Naive thymus-derived CD4-positive, alpha-beta T cell (primary cell): ENCODE measurements at regions of chr20 and their contacts with region 1.

Region 1: GRCh38 chr20:63864847-63865640 is at the start of gene TPD52L2:
- DNase-seq: peak; percentile 86 to 98 (median 96)
- ATAC-seq: peak; percentile 91
- H3K4me3 ChIP-seq: peak within 1 kb of the TSS; percentile 74
- H3K4me3 Mint-ChIP-seq: peak within 1 kb of the TSS; percentile 88 to 100 (median 98)
- H3K27ac ChIP-seq: peak within 1 kb of the TSS; percentile 84
- H3K27ac Mint-ChIP-seq: peak within 1 kb of the TSS; percentile 91 to 99 (median 97)
- H3K4me1 ChIP-seq: peaks cover 11 to 14% of the 10 kb centered on the region in 2 donors
- H3K4me1 Mint-ChIP-seq: peaks cover 27 to 42% (median 36%) of the 10 kb centered on the region in 7 donors
- H3K27me3 ChIP-seq: no peaks in the 10 kb centered on the region
- H3K27me3 Mint-ChIP-seq: no peaks in the 10 kb centered on the region
- total RNA-seq, gene TPD52L2: 33.7 to 56.8 (median 43.2) TPM

Region 2: DNA sequence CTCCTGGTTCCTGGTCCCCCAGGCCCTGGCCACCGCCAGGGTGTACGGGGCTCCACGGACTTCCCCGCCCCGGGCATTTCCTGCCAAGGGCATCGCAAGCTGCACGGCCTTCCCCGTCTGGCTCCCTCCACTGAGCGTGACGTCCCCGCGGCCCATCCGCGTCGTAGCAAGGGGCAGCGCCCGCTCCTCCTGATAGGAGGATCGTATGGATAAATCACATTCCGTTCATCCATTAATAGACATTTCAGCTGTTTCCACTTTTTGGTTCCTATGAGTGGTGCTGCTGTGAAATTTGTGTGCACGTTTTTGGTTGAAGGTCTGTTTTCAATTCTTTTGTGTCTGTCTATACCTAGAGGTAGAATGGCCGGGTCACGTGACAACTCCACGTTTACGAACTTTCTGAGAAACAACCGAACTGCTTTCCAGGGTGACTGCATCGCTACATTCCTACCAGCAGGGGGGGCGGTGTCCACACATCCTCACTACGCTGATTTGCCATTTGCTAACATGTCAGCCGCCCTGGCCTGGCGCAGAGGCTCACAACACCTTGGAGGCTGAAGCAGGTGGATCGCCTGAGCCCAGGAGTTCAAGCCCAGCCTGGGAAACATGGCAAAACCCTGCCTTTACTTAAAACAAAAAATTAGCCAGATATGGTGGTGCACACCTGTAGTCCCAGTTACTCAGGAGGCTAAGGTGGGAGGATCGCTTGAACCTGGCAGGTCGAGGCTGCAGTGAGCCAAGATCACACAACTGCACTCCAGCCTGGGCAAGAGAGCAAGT is 430.3 kb before region 1 on chr20:
- CTCF ChIA-PET with region 1: no interaction called
- POLR2A ChIA-PET with region 1: no interaction called
- intact Hi-C with region 1: loop called in 1 of 2 experiments (anchors 10 kb)
- DNase-seq: peak; percentile 56 to 84 (median 77)
- ATAC-seq: peak; percentile 89
- H3K4me3 ChIP-seq: peak overlapping the region; percentile 25
- H3K4me3 Mint-ChIP-seq: peak overlapping the region; percentile 50 to 79 (median 70)
- H3K27ac ChIP-seq: peak overlapping the region; percentile 49
- H3K27ac Mint-ChIP-seq: peak overlapping the region; percentile 49 to 93 (median 85)
- H3K4me1 ChIP-seq: peaks cover 0 to 9% of the 10 kb centered on the region in 2 donors
- H3K4me1 Mint-ChIP-seq: peaks cover 8 to 16% (median 14%) of the 10 kb centered on the region in 7 donors
- H3K27me3 ChIP-seq: no peaks in the 10 kb centered on the region
- H3K27me3 Mint-ChIP-seq: peaks cover 0 to 9% (median 0%) of the 10 kb centered on the region in 5 donors

Region 3: DNA sequence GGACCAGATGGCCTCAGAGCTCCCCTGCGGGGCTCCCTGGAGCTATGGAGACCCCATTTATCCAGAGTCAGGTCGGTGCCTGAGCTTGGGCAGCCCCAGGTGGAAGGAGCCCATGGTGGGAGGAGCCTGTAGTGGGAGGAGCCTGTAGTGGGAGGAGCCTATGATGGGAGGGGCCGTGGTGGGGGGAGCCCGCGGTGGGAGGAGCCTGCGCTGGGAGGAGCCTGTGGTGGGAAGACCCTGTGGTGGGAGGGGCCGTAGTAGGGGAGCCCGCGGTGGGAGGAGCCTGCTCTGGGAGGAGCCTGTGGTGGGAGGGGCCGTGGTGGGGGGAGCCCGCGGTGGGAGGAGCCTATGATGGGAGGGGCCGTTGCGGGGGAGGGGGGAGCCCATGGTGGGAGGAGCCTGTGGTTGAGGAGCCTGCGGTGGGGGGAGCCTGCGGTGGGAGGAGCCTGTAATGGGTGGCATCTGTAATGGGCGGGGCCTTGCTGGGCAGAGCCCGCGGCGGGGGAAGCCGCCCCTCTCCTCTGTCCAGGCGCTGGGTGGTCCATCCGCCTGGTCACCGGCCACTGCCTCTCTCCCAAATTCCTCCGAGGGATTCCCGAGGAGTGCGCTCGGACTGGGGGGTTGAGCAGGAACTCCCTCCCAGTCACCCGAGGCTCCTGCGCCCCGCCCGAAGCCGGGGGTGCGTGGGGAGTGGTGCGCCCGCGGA is 311.7 kb before region 1 on chr20:
- CTCF ChIA-PET with region 1: no interaction called
- POLR2A ChIA-PET with region 1: no interaction called
- intact Hi-C with region 1: loop called (anchors 1 kb)
- DNase-seq: peak; percentile 81 to 96 (median 88)
- ATAC-seq: peak; percentile 92
- H3K4me3 ChIP-seq: peak overlapping the region; percentile 68
- H3K4me3 Mint-ChIP-seq: peak overlapping the region; percentile 70 to 85 (median 76)
- H3K27ac ChIP-seq: peak overlapping the region; percentile 70
- H3K27ac Mint-ChIP-seq: peak overlapping the region; percentile 62 to 97 (median 92)
- H3K4me1 ChIP-seq: peaks cover 13 to 21% of the 10 kb centered on the region in 2 donors
- H3K4me1 Mint-ChIP-seq: peaks cover 9 to 18% (median 13%) of the 10 kb centered on the region in 7 donors
- H3K27me3 ChIP-seq: no peaks in the 10 kb centered on the region
- H3K27me3 Mint-ChIP-seq: peaks cover 0 to 19% (median 5%) of the 10 kb centered on the region in 5 donors

Region 4: GRCh38 chr20:63657937-63658748 is 206.9 kb before region 1 on chr20 and contains the start of gene RTEL1:
- CTCF ChIA-PET with region 1: interaction called, 3 read pairs
- POLR2A ChIA-PET with region 1: interaction called, 3 read pairs
- intact Hi-C with region 1: loop called (anchors 1 kb)
- DNase-seq: peak; percentile 79 to 99 (median 89)
- ATAC-seq: peak; percentile 90
- H3K4me3 ChIP-seq: peak within 1 kb of the TSS; percentile 100
- H3K4me3 Mint-ChIP-seq: peak within 1 kb of the TSS; percentile 86 to 97 (median 94)
- H3K27ac ChIP-seq: peak within 1 kb of the TSS; percentile 83
- H3K27ac Mint-ChIP-seq: peak within 1 kb of the TSS; percentile 93 to 97 (median 95)
- H3K4me1 ChIP-seq: peaks cover 18 to 20% of the 10 kb centered on the region in 2 donors
- H3K4me1 Mint-ChIP-seq: peaks cover 14 to 57% (median 36%) of the 10 kb centered on the region in 7 donors
- H3K27me3 ChIP-seq: no peaks in the 10 kb centered on the region
- H3K27me3 Mint-ChIP-seq: peaks cover 0 to 2% (median 0%) of the 10 kb centered on the region in 5 donors
- total RNA-seq, gene RTEL1: 28.4 to 47.2 (median 32.4) TPM

Region 5: GRCh38 chr20:63782051-63782471 is 83.0 kb before region 1 on chr20:
- CTCF ChIA-PET with region 1: interaction called, 4 read pairs
- POLR2A ChIA-PET with region 1: interaction called, 4 read pairs
- intact Hi-C with region 1: loop called (anchors 1 kb)
- DNase-seq: peak in 6 of 9 donors; percentile 60 to 74 (median 64)
- ATAC-seq: peak; percentile 95
- H3K4me3 ChIP-seq: no peak overlapping the region
- H3K4me3 Mint-ChIP-seq: peak overlapping the region in 8 of 10 donors; percentile 31 to 78 (median 48)
- H3K27ac ChIP-seq: no peak overlapping the region
- H3K27ac Mint-ChIP-seq: peak overlapping the region in 6 of 9 donors; percentile 55 to 92 (median 64)
- H3K4me1 ChIP-seq: peaks cover 8 to 9% of the 10 kb centered on the region in 2 donors
- H3K4me1 Mint-ChIP-seq: peaks cover 9 to 24% (median 18%) of the 10 kb centered on the region in 7 donors
- H3K27me3 ChIP-seq: no peaks in the 10 kb centered on the region
- H3K27me3 Mint-ChIP-seq: no peaks in the 10 kb centered on the region

Region 6: GRCh38 chr20:63955827-63956663 is 91.0 kb after region 1 on chr20 and contains the start of gene UCKL1:
- CTCF ChIA-PET with region 1: no interaction called
- POLR2A ChIA-PET with region 1: interaction called, 12 read pairs
- intact Hi-C with region 1: loop called (anchors 1 kb)
- DNase-seq: peak; percentile 82 to 95 (median 93)
- ATAC-seq: peak; percentile 91
- H3K4me3 ChIP-seq: peak within 1 kb of the TSS; percentile 87
- H3K4me3 Mint-ChIP-seq: peak within 1 kb of the TSS; percentile 79 to 87 (median 86)
- H3K27ac ChIP-seq: peak within 1 kb of the TSS; percentile 93
- H3K27ac Mint-ChIP-seq: peak within 1 kb of the TSS; percentile 32 to 89 (median 80)
- H3K4me1 ChIP-seq: peaks cover 18 to 26% of the 10 kb centered on the region in 2 donors
- H3K4me1 Mint-ChIP-seq: peaks cover 19 to 37% (median 27%) of the 10 kb centered on the region in 7 donors
- H3K27me3 ChIP-seq: no peaks in the 10 kb centered on the region
- H3K27me3 Mint-ChIP-seq: no peaks in the 10 kb centered on the region
- total RNA-seq, gene UCKL1: 42.0 to 49.0 (median 46.6) TPM

Region 7: GRCh38 chr20:64119681-64120341 is 254.8 kb after region 1 on chr20:
- CTCF ChIA-PET with region 1: no interaction called
- POLR2A ChIA-PET with region 1: interaction called, 3 read pairs
- intact Hi-C with region 1: loop called in 1 of 2 experiments (anchors 2 kb)
- DNase-seq: peak in 3 of 9 donors; percentile 2 to 24 (median 14)
- ATAC-seq: peak; percentile 18
- H3K4me3 ChIP-seq: peak overlapping the region; percentile 36
- H3K4me3 Mint-ChIP-seq: peak overlapping the region; percentile 39 to 80 (median 73)
- H3K27ac ChIP-seq: peak overlapping the region; percentile 22
- H3K27ac Mint-ChIP-seq: peak overlapping the region; percentile 69 to 85 (median 78)
- H3K4me1 ChIP-seq: peaks cover 5 to 9% of the 10 kb centered on the region in 2 donors
- H3K4me1 Mint-ChIP-seq: peaks cover 0 to 10% (median 8%) of the 10 kb centered on the region in 7 donors
- H3K27me3 ChIP-seq: no peaks in the 10 kb centered on the region
- H3K27me3 Mint-ChIP-seq: peaks cover 0 to 28% (median 0%) of the 10 kb centered on the region in 5 donors